Aorta (tissue), 5 donors: ENCODE measurements at regions of chr16 and their contacts with region 1.

Region 1: GRCh38 chr16:26524281-26524680 is 542.4 kb upstream of the C16orf82 start:
- DNase-seq: no peak
- ATAC-seq: no peak
- H3K4me3 ChIP-seq: no peak overlapping the region
- H3K27ac ChIP-seq: no peak overlapping the region
- H3K4me1 ChIP-seq: no peaks in the 10 kb centered on the region
- H3K27me3 ChIP-seq: peaks cover 0 to 3% of the 10 kb centered on the region in 2 donors

Region 2: DNA sequence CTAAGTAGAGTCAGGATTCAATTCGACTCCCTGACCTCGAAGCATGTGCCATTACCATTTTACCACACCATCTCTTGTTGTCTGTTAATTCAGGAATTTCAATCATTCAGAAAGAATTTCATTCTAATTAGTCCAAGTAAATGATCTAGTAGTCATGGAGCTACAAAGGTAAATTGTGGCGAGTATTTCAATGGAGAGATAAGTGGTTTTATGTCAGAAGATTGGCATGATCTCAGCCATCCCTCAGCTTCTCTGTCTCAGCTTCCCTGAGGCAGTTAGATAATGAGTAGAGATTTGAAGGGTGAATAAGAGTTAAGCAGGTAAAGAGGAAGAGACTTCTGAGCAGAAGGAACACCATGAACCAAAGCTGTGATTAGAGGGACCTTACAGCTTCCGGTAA is 738.9 kb before region 1 on chr16:
- intact Hi-C with region 1: no loop called
- DNase-seq: no peak
- ATAC-seq: no peak
- H3K4me3 ChIP-seq: no peak overlapping the region
- H3K27ac ChIP-seq: no peak overlapping the region
- H3K4me1 ChIP-seq: no peaks in the 10 kb centered on the region
- H3K27me3 ChIP-seq: no peaks in the 10 kb centered on the region

Region 3: DNA sequence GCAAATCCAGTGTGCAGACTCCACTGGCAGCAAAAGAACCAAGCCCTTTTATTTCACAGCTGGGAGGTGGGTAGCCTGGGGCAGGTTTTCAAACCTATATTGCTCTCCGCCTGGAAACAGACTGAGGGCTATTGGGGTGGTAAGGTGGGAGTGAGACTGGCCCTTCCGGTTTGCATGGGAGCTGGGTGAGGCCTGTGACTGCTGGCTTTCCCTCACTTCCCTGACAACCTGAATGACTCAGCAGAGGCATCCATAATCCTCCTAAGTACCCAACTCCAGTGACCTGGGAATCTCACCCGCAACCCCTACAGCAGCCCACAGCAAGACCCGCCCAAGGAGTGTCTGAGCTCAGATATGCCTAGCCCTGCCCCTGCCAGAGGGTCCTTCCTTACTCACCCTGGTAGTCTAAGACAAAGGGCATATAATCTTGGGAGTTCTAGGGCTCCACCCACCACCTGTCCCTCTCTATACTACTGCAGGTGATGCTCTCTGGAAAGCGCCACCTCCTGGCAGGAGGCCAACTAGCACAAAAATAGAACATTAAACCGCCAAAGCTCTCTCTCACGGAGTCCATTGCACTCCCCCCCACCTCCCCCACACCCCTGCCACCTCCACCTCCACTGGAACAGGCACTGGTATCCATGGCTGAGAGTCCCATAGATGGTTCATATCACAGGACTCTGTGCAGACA is 59.6 kb before region 1 on chr16:
- intact Hi-C with region 1: loop called in 1 of 2 experiments (anchors 10 kb)
- DNase-seq: no peak
- ATAC-seq: no peak
- H3K4me3 ChIP-seq: no peak overlapping the region
- H3K27ac ChIP-seq: no peak overlapping the region
- H3K4me1 ChIP-seq: no peaks in the 10 kb centered on the region
- H3K27me3 ChIP-seq: no peaks in the 10 kb centered on the region

Region 4: GRCh38 chr16:26649381-26650045 is 125.2 kb after region 1 on chr16:
- intact Hi-C with region 1: no loop called
- DNase-seq: no peak
- ATAC-seq: no peak
- H3K4me3 ChIP-seq: no peak overlapping the region
- H3K27ac ChIP-seq: no peak overlapping the region
- H3K4me1 ChIP-seq: no peaks in the 10 kb centered on the region
- H3K27me3 ChIP-seq: no peaks in the 10 kb centered on the region